Cardiac septum (tissue), 1 donor: ENCODE measurements at regions of chrX and their contacts with region 1.

Region 1: DNA sequence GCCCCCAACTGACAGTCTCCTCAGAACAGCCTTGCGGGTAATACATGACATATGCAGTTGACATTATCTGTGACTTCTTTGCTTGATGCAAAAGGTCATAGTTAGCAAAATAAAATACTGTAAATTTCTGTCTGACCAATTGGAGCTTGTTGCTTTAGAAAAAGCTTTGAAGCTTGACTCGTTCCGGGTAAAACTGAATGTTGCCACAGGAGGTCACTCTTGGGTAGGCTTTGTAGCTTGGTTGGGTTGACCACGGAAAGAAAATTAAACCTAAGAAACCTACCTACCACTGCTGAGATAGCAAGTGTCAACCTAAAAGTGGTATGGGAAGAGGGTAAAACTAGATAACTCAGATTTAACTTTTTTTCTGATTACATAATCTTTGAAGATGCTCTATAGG is 23.2 kb downstream of the PRPS2 start:
- DNase-seq: no peak

Region 2: GRCh38 chrX:12894074-12895030 is 79.9 kb after region 1 on chrX:
- intact Hi-C with region 1: loop called (anchors 5 kb)
- DNase-seq: no peak

Region 3: GRCh38 chrX:13495232-13495631 is 680.8 kb after region 1 on chrX:
- intact Hi-C with region 1: loop called (anchors 10 kb)
- DNase-seq: no peak